Natural killer cell (primary cell): ENCODE measurements at regions of chr14 and their contacts with region 1.

Region 1: DNA sequence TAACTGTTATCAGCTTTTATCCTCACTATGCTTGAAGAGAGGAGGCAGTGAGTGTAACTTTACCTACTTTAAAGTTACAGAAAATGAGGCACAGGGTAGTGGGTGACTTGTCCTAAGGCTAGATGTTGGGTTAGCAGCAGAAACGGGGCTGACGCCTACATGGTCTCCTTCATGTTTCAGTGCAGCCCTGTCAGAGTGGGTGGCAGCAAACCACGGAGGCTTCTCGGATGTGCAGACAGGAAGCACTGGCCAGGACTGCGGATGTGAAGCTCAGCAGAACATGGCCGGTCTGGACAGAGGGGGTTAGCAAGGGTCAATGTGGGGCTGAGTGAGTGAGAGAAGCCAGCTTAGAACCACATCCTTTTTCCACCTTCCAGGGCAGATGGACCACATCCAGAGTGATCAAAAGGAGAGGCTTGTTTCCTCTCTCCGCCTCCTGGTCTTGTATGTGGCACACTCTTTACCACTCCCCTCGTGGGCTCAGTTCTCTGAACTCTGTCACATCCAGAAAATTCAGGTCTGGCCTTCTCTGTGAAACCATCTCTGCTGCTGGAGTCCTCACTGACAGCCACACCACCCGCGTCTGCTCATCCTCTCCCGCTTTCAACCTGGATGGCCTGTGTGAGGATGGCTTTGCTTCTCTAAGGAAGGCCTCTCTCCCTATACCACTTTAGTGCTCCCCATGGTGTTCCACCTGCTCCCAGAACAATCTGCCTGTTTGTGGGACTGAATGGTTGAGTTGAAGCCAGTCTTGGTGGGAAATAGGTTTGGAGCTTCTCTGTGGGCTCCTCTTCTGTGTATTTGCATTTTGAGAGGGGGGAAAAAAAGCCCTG is 14.1 kb downstream of the SUSD6 start:
- DNase-seq: peak; percentile 65 to 78
- ATAC-seq: peak; percentile 89 to 94 (median 91)
- H3K4me3 ChIP-seq: peak overlapping the region; percentile 7
- H3K4me3 Mint-ChIP-seq: peak overlapping the region; percentile 88
- H3K27ac ChIP-seq: peak overlapping the region; percentile 89
- H3K27ac Mint-ChIP-seq: peak overlapping the region; percentile 92 to 97
- H3K4me1 ChIP-seq: peaks cover 72% of the 10 kb centered on the region
- H3K4me1 Mint-ChIP-seq: peaks cover 81 to 86% of the 10 kb centered on the region in 2 donors
- H3K27me3 ChIP-seq: no peaks in the 10 kb centered on the region
- H3K27me3 Mint-ChIP-seq: no peaks in the 10 kb centered on the region
- CTCF ChIP-seq: no peak

Region 2: DNA sequence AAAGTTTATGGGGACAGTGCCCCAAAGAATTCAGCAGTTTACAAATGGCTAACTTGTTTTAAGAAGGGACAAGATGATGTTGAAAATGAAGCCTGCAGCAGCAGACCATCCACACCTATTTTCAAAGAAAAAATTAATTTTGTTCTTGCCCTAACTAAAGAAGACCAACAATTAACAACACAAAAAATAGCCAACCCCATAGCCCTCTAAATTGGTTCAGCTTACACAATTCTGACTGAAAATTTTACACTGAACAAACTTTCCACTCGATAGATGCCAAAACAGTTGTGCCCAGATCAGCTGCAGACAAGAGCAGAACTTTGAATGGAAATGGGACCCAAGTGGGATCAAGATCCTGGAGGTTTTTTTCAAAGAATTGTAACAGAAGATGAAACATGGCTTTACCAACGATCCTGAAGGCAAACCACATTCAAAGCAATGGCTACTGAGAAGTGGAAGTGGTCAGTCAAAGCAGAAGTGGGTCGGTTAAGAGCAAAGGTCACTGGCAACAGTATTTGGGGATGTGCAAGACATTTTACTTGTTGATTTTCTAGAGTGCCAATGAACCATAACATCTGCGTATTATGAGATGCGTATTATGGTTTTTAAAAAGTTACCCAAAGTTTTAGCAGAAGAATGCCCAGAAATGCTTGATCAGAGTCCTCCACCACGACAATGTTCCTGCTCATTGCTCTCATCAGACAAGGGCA is 197.1 kb before region 1 on chr14:
- intact Hi-C with region 1: no loop called
- DNase-seq: no peak
- ATAC-seq: no peak
- H3K4me3 ChIP-seq: no peak overlapping the region
- H3K4me3 Mint-ChIP-seq: no peak overlapping the region
- H3K27ac ChIP-seq: no peak overlapping the region
- H3K27ac Mint-ChIP-seq: no peak overlapping the region
- H3K4me1 ChIP-seq: no peaks in the 10 kb centered on the region
- H3K4me1 Mint-ChIP-seq: peaks cover 18 to 19% of the 10 kb centered on the region in 2 donors
- H3K27me3 ChIP-seq: no peaks in the 10 kb centered on the region
- H3K27me3 Mint-ChIP-seq: no peaks in the 10 kb centered on the region
- CTCF ChIP-seq: no peak

Region 3: GRCh38 chr14:69611201-69612011 is 14.1 kb before region 1 on chr14 and contains the start of gene SUSD6:
- intact Hi-C with region 1: loop called (anchors 1 kb)
- DNase-seq: peak; percentile 78 to 95
- ATAC-seq: peak; percentile 79 to 92 (median 82)
- H3K4me3 ChIP-seq: peak within 1 kb of the TSS; percentile 88
- H3K4me3 Mint-ChIP-seq: peak within 1 kb of the TSS; percentile 89
- H3K27ac ChIP-seq: peak within 1 kb of the TSS; percentile 76
- H3K27ac Mint-ChIP-seq: peak within 1 kb of the TSS; percentile 95 to 96
- H3K4me1 ChIP-seq: peaks cover 48% of the 10 kb centered on the region
- H3K4me1 Mint-ChIP-seq: peaks cover 51 to 52% of the 10 kb centered on the region in 2 donors
- H3K27me3 ChIP-seq: no peaks in the 10 kb centered on the region
- H3K27me3 Mint-ChIP-seq: no peaks in the 10 kb centered on the region
- CTCF ChIP-seq: no peak
- total RNA-seq, gene SUSD6: 119 to 144 (median 140) TPM

Region 4: GRCh38 chr14:69637503-69638030 is 12.1 kb after region 1 on chr14:
- intact Hi-C with region 1: loop called (anchors 2 kb)
- DNase-seq: no peak
- ATAC-seq: peak in 2 of 3 donors; percentile 20 to 40
- H3K4me3 ChIP-seq: no peak overlapping the region
- H3K4me3 Mint-ChIP-seq: peak overlapping the region; percentile 84
- H3K27ac ChIP-seq: peak overlapping the region; percentile 68
- H3K27ac Mint-ChIP-seq: peak overlapping the region; percentile 90 to 93
- H3K4me1 ChIP-seq: peaks cover 48% of the 10 kb centered on the region
- H3K4me1 Mint-ChIP-seq: peaks cover 91 to 96% of the 10 kb centered on the region in 2 donors
- H3K27me3 ChIP-seq: no peaks in the 10 kb centered on the region
- H3K27me3 Mint-ChIP-seq: no peaks in the 10 kb centered on the region
- CTCF ChIP-seq: no peak

Region 5: GRCh38 chr14:69666690-69667239 is 41.2 kb after region 1 on chr14:
- intact Hi-C with region 1: loop called (anchors 5 kb)
- DNase-seq: no peak
- ATAC-seq: no peak
- H3K4me3 ChIP-seq: no peak overlapping the region
- H3K4me3 Mint-ChIP-seq: no peak overlapping the region
- H3K27ac ChIP-seq: no peak overlapping the region
- H3K27ac Mint-ChIP-seq: peak overlapping the region; percentile 59 to 87
- H3K4me1 ChIP-seq: peaks cover 36% of the 10 kb centered on the region
- H3K4me1 Mint-ChIP-seq: peaks cover 93% of the 10 kb centered on the region in 2 donors
- H3K27me3 ChIP-seq: no peaks in the 10 kb centered on the region
- H3K27me3 Mint-ChIP-seq: no peaks in the 10 kb centered on the region
- CTCF ChIP-seq: no peak